ENCODE measurements at regions of chr12 and their contacts with region 1.

Region 1: DNA sequence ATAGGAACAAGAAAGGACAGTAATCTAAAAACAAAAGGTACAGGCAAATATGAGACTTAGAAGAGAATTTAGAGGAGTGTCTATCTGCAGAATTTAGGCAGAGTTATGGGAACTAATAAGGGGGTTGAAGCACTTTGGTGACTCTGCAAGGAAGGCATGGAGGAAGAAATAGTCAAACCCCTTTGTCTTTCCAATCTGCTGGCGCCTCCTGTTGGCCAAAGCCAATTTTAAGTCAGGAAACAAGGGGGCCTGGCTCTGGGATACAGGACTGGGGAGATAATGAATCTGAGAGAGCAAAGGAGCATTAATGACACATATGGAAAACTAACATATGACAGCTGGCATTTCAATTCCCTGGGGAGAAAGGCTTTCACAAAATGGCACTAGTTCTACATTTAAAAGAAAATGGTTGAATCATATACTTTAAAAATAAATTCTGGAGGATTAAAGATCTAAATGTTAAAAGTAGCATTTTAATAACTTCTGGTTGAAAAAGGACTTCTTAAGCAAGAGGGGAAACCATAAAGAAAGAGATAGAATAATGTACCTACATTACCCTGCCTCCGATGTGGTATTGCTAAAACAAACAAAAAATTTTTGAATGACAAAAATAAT is 48.5 kb upstream of the CSRP2 start:
- DNase-seq: no peak
- H3K4me3 ChIP-seq: no peak overlapping the region
- H3K4me3 Mint-ChIP-seq: no peak overlapping the region
- H3K27ac ChIP-seq: no peak overlapping the region
- H3K27ac Mint-ChIP-seq: no peak overlapping the region
- H3K4me1 ChIP-seq: no peaks in the 10 kb centered on the region
- H3K4me1 Mint-ChIP-seq: no peaks in the 10 kb centered on the region
- H3K27me3 ChIP-seq: no peaks in the 10 kb centered on the region
- H3K27me3 Mint-ChIP-seq: peaks cover 12 to 13% of the 10 kb centered on the region in 2 donors

Region 2: GRCh38 chr12:76621582-76622024 is 305.7 kb before region 1 on chr12:
- CTCF ChIA-PET with region 1: interaction called, 3 read pairs
- POLR2A ChIA-PET with region 1: no interaction called
- intact Hi-C with region 1: loop called (anchors 1 kb)
- DNase-seq: peak; percentile 63 to 71 (median 63)
- H3K4me3 ChIP-seq: no peak overlapping the region
- H3K4me3 Mint-ChIP-seq: no peak overlapping the region
- H3K27ac ChIP-seq: no peak overlapping the region
- H3K27ac Mint-ChIP-seq: no peak overlapping the region
- H3K4me1 ChIP-seq: no peaks in the 10 kb centered on the region
- H3K4me1 Mint-ChIP-seq: peaks cover 0 to 4% (median 3%) of the 10 kb centered on the region in 4 donors
- H3K27me3 ChIP-seq: no peaks in the 10 kb centered on the region
- H3K27me3 Mint-ChIP-seq: no peaks in the 10 kb centered on the region

Measured in CD4-positive, alpha-beta memory T cell (primary cell).